Mucosa of descending colon (tissue), 3 donors: ENCODE measurements at regions of chr5 and their contacts with region 1.

Region 1: GRCh38 chr5:80093796-80094195 is 58.6 kb downstream of the THBS4 start:
- DNase-seq: no peak
- ATAC-seq: peak; percentile 25
- H3K4me3 ChIP-seq: no peak overlapping the region
- H3K4me1 ChIP-seq: no peaks in the 10 kb centered on the region
- CTCF ChIP-seq: no peak

Region 2: DNA sequence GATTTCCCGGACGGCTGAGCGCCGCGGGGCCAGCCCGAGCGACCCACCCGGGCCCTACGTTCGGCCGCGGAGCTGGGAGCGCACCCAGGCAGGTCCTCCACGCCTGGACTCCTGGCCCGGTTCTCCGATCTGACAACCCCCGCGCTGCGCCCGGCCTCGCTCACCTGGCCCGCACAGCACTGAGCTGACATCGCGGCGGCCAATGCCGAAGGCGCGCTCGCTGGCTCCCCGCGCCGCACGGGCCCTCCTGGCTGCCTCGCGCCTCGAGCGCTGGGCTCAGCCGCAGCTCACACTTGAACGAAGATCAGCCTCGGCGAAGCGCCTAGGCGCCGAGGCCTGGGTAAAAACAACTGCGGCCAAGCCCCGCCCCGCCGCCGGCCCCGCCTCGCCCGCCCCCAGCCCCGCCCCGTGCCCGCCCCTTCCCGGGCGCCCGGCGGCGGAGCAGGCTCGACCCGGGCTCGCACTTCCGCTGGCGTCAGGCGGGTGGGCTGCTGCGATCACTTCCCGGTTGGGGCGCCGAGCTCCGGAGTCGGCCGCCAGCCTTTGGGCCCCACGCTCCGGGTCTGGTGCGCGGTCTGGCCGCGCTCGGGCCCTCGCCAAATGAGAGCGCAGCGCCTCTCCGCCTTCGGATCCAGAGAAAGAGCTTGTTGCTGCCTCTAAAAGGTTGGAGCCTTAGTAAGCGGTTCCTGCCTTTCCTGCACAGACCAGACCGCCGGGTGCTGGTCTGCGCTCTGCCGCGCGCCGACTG is 162.1 kb after region 1 on chr5 and contains the start of gene SERINC5:
- intact Hi-C with region 1: no loop called
- DNase-seq: peak; percentile 85 to 93 (median 92)
- ATAC-seq: peak; percentile 82
- H3K4me3 ChIP-seq: peak within 1 kb of the TSS; percentile 50
- H3K4me1 ChIP-seq: peaks cover 28% of the 10 kb centered on the region
- CTCF ChIP-seq: no peak
- total RNA-seq, gene SERINC5: 66.6 to 153 (median 126) TPM

Region 3: DNA sequence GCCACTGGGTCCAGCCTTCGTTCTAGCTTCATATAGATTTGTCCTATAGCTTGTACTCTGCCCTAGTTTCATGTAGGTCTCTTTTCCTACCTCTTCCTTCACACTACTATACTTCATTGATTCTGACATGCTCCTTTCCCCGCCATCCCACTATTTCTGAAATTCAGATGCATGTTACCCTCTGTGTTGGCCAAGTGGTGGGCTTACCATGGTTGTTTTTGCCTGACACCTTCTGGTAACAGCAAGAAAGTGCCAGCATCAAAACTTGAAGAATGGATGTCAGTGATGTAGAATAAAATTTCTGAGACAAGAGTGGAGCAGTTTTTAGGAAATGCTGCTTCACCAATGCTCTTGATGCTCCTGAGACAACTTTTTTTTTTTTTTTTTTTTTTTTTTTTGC is 181.6 kb after region 1 on chr5:
- intact Hi-C with region 1: loop called in 1 of 2 experiments (anchors 10 kb)
- DNase-seq: no peak
- ATAC-seq: peak; percentile 31
- H3K4me3 ChIP-seq: no peak overlapping the region
- H3K4me1 ChIP-seq: no peaks in the 10 kb centered on the region
- CTCF ChIP-seq: no peak

Region 4: DNA sequence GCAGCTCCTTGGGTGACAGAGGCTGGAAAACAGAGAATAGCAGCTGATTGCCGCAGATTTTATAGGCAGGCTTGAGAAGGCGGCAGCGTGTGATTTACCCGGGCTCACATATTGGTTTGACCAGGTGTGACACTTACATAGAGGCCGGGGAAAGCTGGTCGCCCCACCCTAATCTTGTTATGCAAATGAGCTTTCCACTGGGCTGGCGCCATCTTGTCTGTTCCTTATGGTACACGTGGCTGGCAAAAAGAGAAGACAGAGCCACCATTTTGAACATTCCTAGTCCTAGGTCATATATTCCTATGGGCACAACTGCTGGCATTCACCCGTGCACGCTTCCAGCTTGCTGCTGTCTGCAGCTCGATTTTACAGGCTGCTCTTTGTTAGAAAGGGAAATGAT is 214.7 kb after region 1 on chr5:
- intact Hi-C with region 1: loop called in 1 of 2 experiments (anchors 5 kb)
- DNase-seq: no peak
- ATAC-seq: no peak
- H3K4me3 ChIP-seq: no peak overlapping the region
- H3K4me1 ChIP-seq: no peaks in the 10 kb centered on the region
- CTCF ChIP-seq: no peak